Activated CD4-positive, alpha-beta T cell treated with anti-CD3 and anti-CD28 coated beads, Interleukin-2, amount 10 ng/mL, durations not matched to agents 24 days and 14 days (primary cell): ENCODE measurements at regions of chr9 and their contacts with region 1.

Region 1: DNA sequence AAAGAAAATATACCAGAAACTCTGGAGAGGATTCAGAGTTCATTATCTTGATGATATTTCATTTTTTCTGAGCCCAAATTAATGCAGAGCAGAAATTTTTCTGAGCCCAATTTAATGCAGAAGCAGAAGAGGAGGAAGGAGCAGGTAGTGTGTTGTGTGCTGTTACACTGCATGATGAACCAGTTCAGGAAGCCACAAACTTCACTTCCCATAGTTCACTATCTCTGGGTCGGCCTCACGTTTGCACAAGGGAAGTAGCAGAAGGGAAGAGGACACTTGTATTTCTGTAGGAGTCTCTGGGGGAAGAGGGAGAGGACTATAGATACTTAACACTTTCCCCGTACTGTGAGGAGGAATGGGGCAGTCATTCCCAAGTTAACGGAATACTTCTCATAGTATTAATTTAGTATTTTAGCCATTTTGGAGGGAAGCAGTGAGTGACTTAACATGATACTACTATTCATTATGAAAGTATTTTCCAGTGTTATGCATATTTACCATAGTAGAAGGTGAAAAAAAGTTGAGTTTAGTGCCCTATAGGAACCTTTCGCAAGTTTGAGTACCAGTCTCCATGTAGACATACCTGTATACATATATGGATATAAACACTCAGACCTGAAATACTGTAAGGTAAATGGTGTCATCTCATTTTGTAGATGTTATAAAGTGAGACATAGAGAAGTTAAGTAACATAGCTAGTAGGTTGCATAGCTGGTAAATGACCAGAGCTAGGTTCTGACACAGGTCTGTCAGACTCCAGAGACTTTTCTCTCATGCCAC is 30.0 kb downstream of the XPA start:
- DNase-seq: peak; percentile 60
- H3K4me3 Mint-ChIP-seq: no peak overlapping the region
- H3K27ac Mint-ChIP-seq: no peak overlapping the region
- H3K4me1 Mint-ChIP-seq: peaks cover 20% of the 10 kb centered on the region
- H3K27me3 Mint-ChIP-seq: no peaks in the 10 kb centered on the region

Region 2: GRCh38 chr9:97740848-97741821 is 74.0 kb after region 1 on chr9:
- intact Hi-C with region 1: no loop called
- DNase-seq: peak; percentile 79
- H3K4me3 Mint-ChIP-seq: peak overlapping the region; percentile 66
- H3K27ac Mint-ChIP-seq: no peak overlapping the region
- H3K4me1 Mint-ChIP-seq: peaks cover 7% of the 10 kb centered on the region
- H3K27me3 Mint-ChIP-seq: peaks cover 67% of the 10 kb centered on the region

Region 3: DNA sequence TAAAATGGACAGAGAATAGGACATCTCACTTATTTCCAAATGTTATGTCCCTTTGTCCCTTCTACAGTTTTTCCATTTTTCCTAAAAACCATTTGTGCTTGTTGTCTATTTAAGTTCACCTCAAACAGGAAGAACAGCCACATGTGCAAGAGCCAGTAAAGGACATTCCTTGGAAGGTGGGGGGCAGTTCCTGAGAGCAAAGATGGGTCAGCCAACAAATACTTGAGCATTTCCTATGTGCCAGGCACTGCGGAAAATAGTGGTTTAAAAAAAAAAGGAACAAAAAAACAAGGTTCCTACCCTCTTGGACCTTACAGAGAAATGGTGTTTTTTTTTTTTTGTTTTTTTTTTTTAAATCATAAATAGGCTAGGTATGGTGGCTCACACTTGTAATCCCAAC is 342.8 kb after region 1 on chr9:
- intact Hi-C with region 1: loop called (anchors 10 kb)
- DNase-seq: no peak
- H3K4me3 Mint-ChIP-seq: no peak overlapping the region
- H3K27ac Mint-ChIP-seq: no peak overlapping the region
- H3K4me1 Mint-ChIP-seq: peaks cover 22% of the 10 kb centered on the region
- H3K27me3 Mint-ChIP-seq: no peaks in the 10 kb centered on the region